Right ventricle myocardium inferior (tissue), 1 donor: ENCODE measurements at regions of chr12 and their contacts with region 1.

Region 1: GRCh38 chr12:108731105-108731865 is at the start of gene CORO1C:
- DNase-seq: peak; percentile 98
- ATAC-seq: peak; percentile 90
- total RNA-seq, gene CORO1C: 76.4 TPM

Region 2: DNA sequence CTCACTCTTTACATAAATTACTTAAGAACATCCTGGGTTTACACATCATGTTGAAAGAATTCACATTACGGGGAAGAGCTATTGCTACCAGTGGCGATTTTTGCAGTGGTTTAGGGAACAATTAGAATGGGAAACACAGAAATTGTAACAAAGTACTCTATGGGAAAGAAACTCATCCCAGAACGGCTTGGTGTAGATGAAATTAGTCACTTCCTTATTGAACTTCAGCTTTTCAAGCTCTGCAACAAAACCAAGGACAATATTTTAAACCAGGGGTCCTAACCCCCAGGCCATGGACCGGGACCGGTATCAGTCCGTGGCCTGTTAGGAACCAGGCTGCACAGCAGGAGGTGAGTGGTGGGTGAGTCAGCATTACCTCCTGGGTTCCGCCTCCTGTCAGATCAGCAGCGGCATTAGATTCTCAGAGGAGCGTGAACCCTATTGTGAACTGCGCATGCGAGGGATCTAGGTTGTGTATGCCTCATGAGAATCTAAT is 248.5 kb before region 1 on chr12:
- intact Hi-C with region 1: no loop called
- DNase-seq: no peak
- ATAC-seq: no peak

Region 3: GRCh38 chr12:108664338-108665258 is 66.7 kb before region 1 on chr12:
- intact Hi-C with region 1: loop called (anchors 2 kb)
- DNase-seq: peak; percentile 77
- ATAC-seq: peak; percentile 91

Region 4: GRCh38 chr12:108773798-108774788 is 42.8 kb after region 1 on chr12:
- intact Hi-C with region 1: loop called (anchors 5 kb)
- DNase-seq: peak; percentile 90
- ATAC-seq: peak; percentile 95

Region 5: GRCh38 chr12:108803428-108804105 is 72.3 kb after region 1 on chr12:
- intact Hi-C with region 1: loop called (anchors 2 kb)
- DNase-seq: no peak
- ATAC-seq: peak; percentile 69